ENCODE measurements at regions of chr2 and their contacts with region 1.

Region 1: DNA sequence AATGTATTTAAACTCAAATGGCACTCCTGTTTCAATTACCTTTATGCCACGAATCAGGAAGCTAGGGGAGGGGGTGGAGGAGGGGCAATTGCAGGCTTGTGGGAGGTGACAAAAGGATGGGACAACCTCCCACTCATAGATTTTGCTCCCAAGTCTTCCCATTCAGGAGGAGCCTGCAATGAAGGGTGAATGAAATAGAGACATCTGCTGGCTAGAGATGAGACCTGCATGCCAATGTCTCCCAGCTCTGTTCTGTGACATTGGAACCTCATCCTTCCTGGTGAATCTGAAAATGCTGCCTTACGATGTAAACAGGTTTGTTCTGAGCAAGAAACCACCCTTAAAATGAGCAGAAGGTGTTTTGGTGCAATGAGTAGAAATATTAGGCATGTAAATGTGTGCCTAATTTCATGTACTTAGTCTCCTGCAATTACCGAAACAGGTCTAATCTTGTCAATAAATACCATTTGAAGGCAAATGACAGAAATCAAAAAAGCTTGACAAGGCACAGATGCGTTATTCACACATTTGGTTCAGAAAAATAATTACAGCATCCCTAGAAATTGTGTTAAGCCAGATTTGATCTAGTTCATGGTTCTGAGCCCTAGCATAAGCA is 2.7 kb upstream of the PID1 start:
- DNase-seq: peak; percentile 49
- CTCF ChIP-seq: peak; percentile 83

Region 2: DNA sequence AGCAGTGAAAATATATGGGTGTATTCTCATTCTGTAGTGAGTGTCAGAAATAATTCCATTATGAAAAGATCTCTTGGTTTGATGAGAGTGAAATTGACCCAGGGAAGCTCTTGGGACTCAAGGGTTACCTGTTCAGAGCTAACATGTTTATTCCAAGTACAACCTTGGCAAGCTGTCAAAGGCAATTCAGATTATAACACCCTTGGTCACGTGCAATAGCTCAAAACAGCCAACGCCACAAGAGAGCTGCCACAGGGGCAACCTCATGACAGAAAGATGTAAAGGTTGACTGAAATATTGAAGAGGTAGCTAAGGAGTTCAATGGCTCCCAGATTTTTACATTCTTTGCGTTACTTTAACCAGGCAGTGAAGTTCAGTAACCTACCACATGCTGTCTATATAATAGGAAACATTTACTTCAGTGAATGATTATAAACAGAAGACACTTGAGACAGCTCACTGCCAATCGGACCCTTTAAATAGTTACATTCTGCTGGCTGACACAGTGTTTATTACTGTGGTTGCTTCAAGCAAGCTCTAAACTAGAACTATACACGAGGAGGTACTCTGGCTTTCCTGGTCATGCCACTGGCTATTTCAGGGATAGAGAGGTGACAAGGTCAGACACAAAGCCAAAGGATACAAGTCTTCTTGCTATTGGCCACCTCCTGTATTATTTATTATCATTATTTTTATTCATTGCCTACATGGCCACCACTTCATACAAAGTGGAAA is 190.1 kb before region 1 on chr2:
- CTCF ChIA-PET with region 1: no interaction called
- POLR2A ChIA-PET with region 1: no interaction called
- DNase-seq: no peak
- CTCF ChIP-seq: no peak

Region 3: GRCh38 chr2:229254206-229254605 is 19.6 kb before region 1 on chr2:
- CTCF ChIA-PET with region 1: interaction called, 10 read pairs
- POLR2A ChIA-PET with region 1: no interaction called
- DNase-seq: no peak
- CTCF ChIP-seq: no peak

Region 4: DNA sequence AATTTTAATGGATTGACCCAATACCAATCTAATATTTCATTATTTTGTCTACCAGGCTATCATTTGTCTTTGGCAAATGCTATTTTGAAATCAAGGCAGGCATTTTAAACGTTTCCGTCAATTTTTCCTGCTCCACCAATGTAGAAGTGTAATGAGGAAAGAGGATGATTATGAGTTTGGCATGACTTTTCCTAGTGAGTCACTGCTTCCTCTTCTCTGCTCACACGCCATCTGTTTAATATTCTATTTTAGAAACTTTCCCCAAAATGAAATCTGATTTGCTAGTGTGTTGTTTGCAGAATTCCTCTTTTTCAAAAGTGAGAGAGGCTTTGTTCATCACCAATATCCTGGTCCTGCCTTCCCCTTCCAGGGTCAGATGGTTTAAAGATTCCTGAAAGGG is 39.8 kb after region 1 on chr2:
- CTCF ChIA-PET with region 1: no interaction called
- POLR2A ChIA-PET with region 1: no interaction called
- DNase-seq: no peak
- CTCF ChIP-seq: no peak

Region 5: GRCh38 chr2:229408356-229408755 is 134.5 kb after region 1 on chr2:
- CTCF ChIA-PET with region 1: no interaction called
- POLR2A ChIA-PET with region 1: no interaction called
- DNase-seq: no peak
- CTCF ChIP-seq: no peak